ENCODE measurements at regions of chr15 and their contacts with region 1.

Region 1: DNA sequence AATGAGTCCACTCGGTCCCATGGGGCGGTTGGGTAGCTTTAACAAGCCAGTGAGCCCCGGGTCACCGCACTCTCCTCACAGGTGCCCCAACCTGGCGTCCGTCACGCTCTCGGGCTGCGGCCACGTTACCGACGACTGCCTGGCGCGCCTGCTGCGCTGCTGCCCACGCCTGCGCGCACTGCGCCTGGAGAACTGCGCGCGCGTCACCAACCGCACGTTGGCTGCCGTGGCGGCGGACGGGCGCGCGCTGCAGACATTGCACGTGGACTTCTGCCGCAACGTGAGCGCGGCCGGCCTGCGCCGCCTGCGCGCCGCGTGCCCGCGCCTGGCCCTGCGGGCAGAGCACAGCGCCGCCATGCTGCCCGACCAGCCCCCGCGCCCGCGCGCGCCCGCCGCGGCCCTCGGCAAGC is 3.4 kb downstream of the FBXL22 start:
- DNase-seq: peak; percentile 91
- H3K4me3 ChIP-seq: peak overlapping the region; percentile 26 to 82 (median 66)
- H3K27ac ChIP-seq: peak overlapping the region; percentile 90 to 97 (median 94)
- H3K4me1 ChIP-seq: peaks cover 11 to 60% (median 56%) of the 10 kb centered on the region in 4 donors
- H3K27me3 ChIP-seq: no peaks in the 10 kb centered on the region
- CTCF ChIP-seq: no peak
- EP300 ChIP-seq: no peak
- POLR2A ChIP-seq: peak; percentile 84

Region 2: DNA sequence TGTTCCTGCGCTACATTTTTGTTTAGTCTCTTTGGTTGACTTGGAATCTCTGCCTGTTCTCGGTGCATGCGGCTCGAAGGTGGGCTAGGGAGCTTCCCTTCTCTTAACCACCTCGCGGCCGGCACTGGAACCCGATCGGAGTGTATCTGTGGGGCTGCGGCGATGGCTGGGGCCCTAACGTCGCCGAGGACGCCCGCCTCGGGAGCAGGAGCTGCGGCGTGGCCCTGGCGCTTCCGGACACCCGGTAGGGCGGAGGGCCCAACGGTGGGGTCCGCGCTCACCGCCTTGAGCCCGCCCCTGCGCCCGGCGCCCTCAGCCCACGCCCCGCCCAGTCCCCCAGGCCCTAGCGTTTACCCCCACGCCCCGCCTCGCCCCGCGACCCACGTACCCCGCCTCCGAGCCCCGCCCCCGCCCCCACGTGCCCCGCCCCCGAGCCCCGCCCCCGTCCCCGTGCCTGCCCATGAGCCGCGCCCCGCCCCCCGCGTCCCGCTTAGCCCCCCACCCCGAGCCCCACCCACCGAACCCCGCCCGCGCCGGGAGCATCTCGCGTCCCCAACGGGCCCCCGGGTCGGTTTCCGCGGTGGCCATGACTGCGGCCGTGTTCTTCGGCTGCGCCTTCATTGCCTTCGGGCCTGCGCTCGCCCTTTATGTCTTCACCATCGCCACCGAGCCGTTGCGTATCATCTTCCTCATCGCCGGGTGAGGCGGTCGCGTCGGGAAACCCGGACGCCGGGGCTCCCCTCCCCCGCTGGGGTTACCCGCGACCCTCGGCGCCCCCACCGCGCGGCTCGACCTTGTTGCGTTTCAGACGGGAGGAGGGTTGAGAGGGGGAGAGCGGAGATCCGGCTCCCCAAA is 323.4 kb before region 1 on chr15 and contains the start of gene APH1B:
- in situ Hi-C with region 1: loop called in 1 of 4 experiments (anchors 25 kb)
- intact Hi-C with region 1: no loop called
- DNase-seq: peak; percentile 90
- H3K4me3 ChIP-seq: peak within 1 kb of the TSS; percentile 64 to 84 (median 74)
- H3K27ac ChIP-seq: peak within 1 kb of the TSS; percentile 84 to 91 (median 88)
- H3K4me1 ChIP-seq: peaks cover 0 to 19% (median 8%) of the 10 kb centered on the region in 4 donors
- H3K27me3 ChIP-seq: no peaks in the 10 kb centered on the region
- CTCF ChIP-seq: peak in 2 of 5 experiments; percentile 22 to 27
- EP300 ChIP-seq: no peak
- POLR2A ChIP-seq: no peak
- total RNA-seq, gene APH1B: 0.80 to 9.7 (median 7.1) TPM

Region 3: DNA sequence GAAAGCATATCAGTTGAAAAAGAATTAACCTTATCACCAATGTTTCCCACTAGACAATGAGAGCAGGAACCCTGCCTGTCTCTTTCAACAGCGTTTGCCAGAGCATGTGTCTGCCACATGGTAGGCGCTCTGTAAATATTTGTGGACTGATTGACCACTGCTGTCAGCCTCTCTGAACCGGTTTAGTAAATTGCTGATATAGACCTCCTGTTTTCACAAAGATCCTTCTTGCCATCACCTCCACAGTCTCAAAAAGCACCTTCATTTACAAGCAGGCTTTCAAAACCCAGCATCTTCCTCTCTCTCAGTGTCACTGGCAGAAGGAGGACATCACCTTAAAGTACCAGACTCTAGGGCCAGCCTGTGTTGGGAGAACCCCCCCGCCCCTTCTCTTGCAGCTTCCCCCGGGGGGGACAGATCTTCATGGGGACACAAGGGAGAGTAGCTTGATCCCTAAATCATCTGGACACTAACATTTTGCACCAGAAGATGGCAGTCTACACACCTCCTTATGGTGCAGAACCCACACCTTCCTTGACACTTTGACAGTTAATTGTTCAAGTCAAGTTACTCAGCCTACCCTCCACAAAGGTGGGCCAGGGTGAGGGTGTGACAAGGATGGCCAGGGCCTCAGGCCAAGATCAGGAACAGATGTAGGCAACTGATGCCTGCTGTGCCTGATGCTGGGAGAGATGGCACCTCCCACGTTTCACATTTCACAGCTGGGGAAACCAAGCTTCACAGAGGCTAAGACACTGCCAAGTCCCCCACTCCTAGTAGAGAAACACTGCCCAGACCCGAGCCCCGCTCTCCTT is 134.0 kb before region 1 on chr15:
- in situ Hi-C with region 1: loop called in 1 of 4 experiments (anchors 10 kb)
- intact Hi-C with region 1: no loop called
- DNase-seq: no peak
- H3K4me3 ChIP-seq: no peak overlapping the region
- H3K27ac ChIP-seq: peak overlapping the region in 1 of 4 donors; percentile 42
- H3K4me1 ChIP-seq: peaks cover 22 to 55% (median 46%) of the 10 kb centered on the region in 4 donors
- H3K27me3 ChIP-seq: no peaks in the 10 kb centered on the region
- CTCF ChIP-seq: peak; percentile 56 to 77 (median 61)
- EP300 ChIP-seq: no peak
- POLR2A ChIP-seq: no peak

Region 4: DNA sequence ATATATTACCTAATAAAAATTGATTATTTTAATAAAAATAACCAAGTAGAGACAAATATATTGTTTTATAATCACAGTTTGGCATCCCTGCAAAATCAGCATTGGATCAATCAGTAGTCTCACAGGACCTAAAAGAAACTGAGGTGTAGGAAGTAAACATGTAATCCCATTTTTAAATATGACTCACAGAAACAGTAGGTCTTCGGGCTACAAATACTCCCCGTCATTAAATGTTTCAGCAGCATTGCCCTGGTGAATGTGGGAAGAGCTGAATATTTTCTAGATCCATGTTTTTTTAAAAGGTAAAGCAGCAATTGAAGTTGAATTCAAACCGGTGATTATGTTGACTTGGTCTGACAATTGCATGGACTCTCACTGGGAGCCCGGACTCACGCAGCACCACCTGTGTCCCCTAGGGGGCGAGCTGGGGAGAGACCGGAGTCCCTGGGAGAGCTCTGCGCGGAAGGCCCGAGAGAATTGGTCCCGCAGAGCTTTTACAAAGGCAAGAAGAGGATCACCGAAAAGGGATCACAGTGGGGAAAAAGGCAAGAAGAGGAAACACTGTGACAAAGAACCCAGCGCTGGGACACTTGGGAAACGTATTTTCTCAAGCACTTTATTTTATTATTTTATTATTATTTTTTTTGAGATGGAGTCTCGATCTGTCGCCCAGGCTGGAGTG is 113.4 kb before region 1 on chr15:
- in situ Hi-C with region 1: loop called in 1 of 4 experiments (anchors 10 kb)
- intact Hi-C with region 1: loop called (anchors 5 kb)
- DNase-seq: peak; percentile 95
- H3K4me3 ChIP-seq: no peak overlapping the region
- H3K27ac ChIP-seq: peak overlapping the region in 2 of 4 donors; percentile 15 to 36
- H3K4me1 ChIP-seq: peaks cover under 1 to 38% (median 9%) of the 10 kb centered on the region in 4 donors
- H3K27me3 ChIP-seq: no peaks in the 10 kb centered on the region
- CTCF ChIP-seq: peak; percentile 91 to 96 (median 96)
- EP300 ChIP-seq: no peak
- POLR2A ChIP-seq: no peak

Region 5: DNA sequence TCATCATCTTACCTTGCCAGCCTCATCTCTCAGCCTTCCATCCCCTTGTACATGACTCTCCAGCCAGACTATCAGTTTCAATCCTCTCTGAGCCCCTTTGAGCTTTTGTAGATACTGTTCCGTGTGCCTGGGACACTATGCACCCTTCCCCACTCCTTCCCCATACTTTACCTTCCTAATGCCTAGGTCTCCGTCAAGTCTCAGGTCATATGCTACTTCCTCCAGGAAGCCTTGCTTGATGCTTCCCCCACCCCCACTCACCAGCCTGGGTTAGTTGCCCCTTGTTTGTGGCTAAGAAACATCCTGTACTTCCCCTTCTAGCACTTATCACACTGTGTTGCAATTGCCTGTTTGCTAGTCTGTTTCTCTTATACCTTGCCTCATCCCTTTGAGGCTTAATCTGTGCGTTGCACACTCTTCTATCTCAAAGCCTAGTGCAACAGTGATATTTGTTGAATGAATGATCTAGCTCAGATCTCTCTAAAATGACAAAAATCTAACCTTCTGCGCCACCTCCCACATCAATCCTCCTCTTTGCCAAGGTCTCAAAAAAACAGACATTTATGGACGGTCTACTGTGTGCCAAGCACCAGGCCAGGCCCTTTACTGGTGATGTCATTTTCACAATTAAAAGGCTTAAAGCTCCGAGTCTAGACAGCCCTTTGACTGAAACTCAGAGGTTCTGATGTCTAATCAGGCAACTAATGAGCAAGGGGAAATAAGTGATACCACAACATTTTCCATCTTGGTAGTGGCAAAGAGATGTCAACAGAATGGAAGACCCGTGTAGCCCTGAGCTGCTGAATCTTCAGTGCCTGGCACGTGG is 102.8 kb before region 1 on chr15:
- in situ Hi-C with region 1: loop called in 1 of 4 experiments (anchors 10 kb)
- intact Hi-C with region 1: loop called (anchors 5 kb)
- DNase-seq: peak; percentile 74
- H3K4me3 ChIP-seq: no peak overlapping the region
- H3K27ac ChIP-seq: peak overlapping the region; percentile 31 to 68 (median 56)
- H3K4me1 ChIP-seq: peaks cover 20 to 57% (median 27%) of the 10 kb centered on the region in 4 donors
- H3K27me3 ChIP-seq: no peaks in the 10 kb centered on the region
- CTCF ChIP-seq: no peak
- EP300 ChIP-seq: no peak
- POLR2A ChIP-seq: no peak

Region 6: DNA sequence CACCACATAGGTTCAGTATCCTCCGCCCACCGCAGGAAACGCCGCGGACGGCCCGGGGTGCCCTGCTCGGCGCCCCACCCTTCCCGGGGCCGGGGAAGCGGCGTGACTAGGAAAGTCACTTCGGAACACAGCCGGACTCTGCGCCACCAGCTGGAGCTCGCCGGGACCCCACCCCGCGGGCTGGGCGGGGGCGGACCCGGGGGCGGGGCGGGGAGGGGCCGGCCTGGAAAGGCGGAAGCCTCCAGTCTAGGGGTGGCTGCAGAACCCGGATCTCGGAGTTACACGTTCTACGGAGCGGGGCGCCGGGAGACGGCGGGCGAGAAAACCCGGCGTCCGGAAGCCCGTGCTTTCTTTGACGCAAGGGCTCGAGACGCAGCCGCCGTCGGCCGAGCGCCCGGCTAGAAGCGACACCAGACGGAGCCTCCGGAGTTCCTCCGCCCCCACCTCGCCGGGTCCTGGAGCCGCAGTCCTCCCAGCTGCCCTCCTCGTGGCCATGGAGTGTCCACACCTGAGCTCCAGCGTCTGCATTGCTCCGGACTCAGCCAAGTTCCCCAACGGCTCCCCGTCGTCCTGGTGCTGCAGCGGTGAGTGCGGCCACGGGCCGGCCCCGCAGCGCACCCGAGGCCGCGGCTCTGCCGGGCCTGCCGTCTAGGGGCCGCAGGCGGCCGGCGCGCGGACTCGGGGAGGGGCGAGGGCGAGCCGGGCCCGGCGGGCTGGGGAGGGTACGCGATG is 96.2 kb before region 1 on chr15 and contains the start of gene USP3:
- in situ Hi-C with region 1: loop called in 1 of 4 experiments (anchors 10 kb)
- intact Hi-C with region 1: loop called (anchors 5 kb)
- DNase-seq: peak; percentile 97
- H3K4me3 ChIP-seq: peak within 1 kb of the TSS; percentile 74 to 94 (median 91)
- H3K27ac ChIP-seq: peak within 1 kb of the TSS; percentile 98 to 100 (median 98)
- H3K4me1 ChIP-seq: peaks cover 39 to 78% (median 58%) of the 10 kb centered on the region in 4 donors
- H3K27me3 ChIP-seq: no peaks in the 10 kb centered on the region
- CTCF ChIP-seq: peak; percentile 4 to 52 (median 38)
- EP300 ChIP-seq: no peak
- POLR2A ChIP-seq: peak; percentile 93
- total RNA-seq, gene USP3: 56.1 to 93.0 (median 73.7) TPM

Measured in transverse colon (tissue), 4 donors.